Activated CD4-positive, alpha-beta memory T cell treated with anti-CD3 and anti-CD28 coated beads, Interleukin-2, amount 10 ng/mL, durations not matched to agents 7 days and 5 days (primary cell): ENCODE measurements at regions of chr19 and their contacts with region 1.

Region 1: DNA sequence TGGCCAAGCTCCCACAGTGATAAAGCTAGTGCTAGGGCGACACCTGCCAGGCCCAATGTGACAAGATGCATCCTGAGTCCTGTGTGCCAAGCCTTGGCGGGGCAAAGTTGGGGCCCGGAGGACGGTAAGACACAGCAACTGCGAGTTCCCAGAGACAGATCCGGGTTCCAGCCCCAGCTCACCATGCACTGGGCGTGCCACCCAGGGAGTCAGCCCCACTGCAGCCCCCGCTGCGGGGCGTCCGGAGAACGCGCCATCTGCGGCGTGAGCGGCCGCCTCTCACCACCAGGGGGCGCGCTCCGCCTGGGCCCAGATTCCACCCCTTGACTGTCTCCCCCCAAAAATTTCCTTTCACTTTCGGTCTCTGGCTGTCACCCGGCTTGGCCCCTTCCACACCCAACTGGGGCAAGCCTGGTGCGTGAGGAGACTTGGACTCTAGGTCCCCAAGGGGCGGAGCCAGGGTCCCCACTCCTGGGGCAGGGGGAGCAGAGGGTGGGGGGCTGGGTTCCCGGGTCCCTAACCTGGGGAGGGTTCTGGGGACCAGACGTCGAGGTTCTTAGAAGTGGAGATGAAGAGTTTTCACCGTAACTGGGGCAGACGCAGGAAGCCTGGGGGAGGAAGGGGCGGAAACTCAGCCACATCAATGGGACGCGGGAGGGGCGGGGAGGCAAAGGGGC is at the start of gene FLT3LG:
- DNase-seq: peak; percentile 94
- H3K4me3 Mint-ChIP-seq: peak within 1 kb of the TSS; percentile 97
- H3K27ac Mint-ChIP-seq: peak within 1 kb of the TSS; percentile 92
- H3K4me1 Mint-ChIP-seq: peaks cover 60% of the 10 kb centered on the region
- H3K27me3 Mint-ChIP-seq: no peaks in the 10 kb centered on the region
- total RNA-seq, gene FLT3LG: 187 to 197 TPM

Region 2: DNA sequence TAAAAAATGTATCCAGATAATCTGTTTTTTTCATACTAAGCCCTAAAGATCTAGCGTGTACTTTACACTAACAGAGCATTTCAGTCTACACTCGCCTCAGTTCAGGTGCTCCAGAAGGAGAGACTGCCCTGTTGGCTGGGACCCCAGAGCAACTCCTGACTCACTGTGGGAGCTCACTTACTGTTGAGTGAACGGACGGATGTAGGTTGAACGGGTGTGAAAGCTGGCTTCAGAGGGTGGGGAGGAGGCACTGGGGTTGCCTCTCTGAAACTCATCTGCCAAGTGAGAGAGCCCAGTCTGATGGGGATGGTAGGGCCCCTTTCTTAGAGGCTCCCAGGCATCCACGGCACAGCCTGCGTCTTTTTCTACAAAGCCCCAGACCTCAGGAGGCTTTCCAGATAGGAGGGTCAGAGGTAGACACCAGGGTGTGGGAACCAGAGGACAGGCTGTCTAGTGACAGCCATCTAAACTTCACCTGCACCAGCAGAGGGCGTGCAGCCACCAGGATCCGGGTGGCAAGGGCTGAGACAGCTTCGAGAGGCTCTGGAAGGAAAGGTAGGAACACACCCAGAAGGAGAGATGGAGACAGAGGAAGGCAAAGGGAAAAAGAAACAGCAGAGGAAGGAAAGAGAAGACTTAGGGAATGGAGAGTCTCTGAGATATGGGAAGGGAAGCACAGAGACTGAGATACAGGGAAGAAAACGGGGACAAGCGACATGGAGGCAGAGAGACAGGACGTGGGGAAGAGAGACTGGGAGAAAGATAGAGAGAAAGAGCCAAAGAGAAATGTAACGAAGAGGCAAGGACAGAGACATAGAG is 82.2 kb before region 1 on chr19:
- CTCF ChIA-PET with region 1: interaction called, 55 read pairs
- POLR2A ChIA-PET with region 1: interaction called, 14 read pairs
- DNase-seq: peak; percentile 85
- H3K4me3 Mint-ChIP-seq: no peak overlapping the region
- H3K27ac Mint-ChIP-seq: peak overlapping the region; percentile 29
- H3K4me1 Mint-ChIP-seq: peaks cover 33% of the 10 kb centered on the region
- H3K27me3 Mint-ChIP-seq: peaks cover 10% of the 10 kb centered on the region

Region 3: DNA sequence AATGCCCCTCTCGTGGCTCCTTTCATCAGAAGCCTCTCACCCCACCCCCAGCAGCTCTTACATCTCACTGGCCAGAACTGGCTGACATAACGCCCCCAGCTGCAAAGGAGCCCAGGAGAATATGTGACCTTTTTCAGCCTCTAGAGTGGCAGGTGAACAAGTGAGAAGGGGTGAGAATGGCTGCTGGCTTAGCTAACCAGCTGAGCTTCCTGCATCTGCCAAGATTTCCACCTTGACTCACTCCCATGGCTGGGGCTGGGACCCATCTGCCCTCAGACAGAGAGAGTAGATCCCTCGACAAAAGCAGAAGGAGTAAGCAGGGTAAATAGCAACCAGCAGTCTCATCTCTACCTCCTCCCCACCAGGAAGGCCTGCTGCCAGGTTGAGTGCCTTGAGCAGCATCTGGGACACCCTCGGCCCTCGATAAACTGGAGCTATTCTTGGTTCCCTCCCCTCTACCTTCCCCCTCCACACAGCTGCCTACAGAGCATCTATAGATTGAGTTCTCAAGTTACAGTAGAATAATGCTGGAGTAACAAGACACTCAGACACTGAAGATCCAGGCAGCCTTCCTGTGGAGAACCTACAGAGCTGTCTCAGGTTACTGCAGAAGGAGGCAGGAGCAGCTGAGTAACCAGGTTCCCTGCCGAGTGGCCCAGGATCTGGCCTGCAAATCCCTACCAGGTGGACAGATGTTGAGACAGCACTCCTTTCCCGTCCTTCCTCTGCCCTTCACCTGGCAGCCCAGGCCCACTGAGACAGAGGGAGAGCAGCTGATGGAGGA is 70.4 kb before region 1 on chr19:
- CTCF ChIA-PET with region 1: no interaction called
- POLR2A ChIA-PET with region 1: no interaction called
- DNase-seq: no peak
- H3K4me3 Mint-ChIP-seq: no peak overlapping the region
- H3K27ac Mint-ChIP-seq: no peak overlapping the region
- H3K4me1 Mint-ChIP-seq: peaks cover 20% of the 10 kb centered on the region
- H3K27me3 Mint-ChIP-seq: peaks cover 4% of the 10 kb centered on the region

Region 4: GRCh38 chr19:49451430-49452181 is 22.4 kb before region 1 on chr19 and contains the start of gene PIH1D1:
- CTCF ChIA-PET with region 1: interaction called, 159 read pairs
- POLR2A ChIA-PET with region 1: interaction called, 192 read pairs
- DNase-seq: peak; percentile 97
- H3K4me3 Mint-ChIP-seq: peak within 1 kb of the TSS; percentile 99
- H3K27ac Mint-ChIP-seq: peak within 1 kb of the TSS; percentile 100
- H3K4me1 Mint-ChIP-seq: peaks cover 72% of the 10 kb centered on the region
- H3K27me3 Mint-ChIP-seq: no peaks in the 10 kb centered on the region
- total RNA-seq, gene PIH1D1: 168 to 170 TPM

Region 5: DNA sequence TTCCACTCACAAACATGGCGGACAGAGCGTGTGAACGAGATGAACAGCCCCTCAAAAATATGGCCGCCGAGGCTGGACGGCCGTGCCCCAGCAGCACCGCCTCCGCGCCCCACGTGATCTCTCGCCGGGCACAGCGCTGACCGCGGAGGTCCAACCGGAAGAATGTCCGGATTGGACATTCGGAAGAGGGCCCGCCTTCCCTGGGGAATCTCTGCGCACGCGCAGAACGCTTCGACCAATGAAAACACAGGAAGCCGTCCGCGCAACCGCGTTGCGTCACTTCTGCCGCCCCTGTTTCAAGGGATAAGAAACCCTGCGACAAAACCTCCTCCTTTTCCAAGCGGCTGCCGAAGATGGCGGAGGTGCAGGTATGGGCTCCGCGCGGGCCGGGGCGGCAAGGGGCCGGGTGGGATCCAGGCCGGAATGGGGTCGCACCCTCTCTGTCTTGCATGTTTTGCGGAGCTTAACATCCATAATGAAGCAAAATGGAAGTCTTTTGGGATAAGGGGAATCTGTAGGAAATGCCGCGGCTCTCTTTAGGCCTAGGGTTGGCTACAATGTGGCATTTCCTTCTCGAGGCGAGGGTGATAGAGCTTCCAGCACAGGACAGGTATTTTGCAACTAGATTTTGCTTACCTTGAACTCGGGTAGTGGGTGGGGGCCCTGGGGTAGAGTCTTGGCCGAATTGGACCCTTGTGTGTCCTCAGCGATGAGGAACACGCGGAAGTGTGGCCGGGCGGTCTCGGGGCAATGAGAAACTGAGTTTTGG is 13.5 kb after region 1 on chr19 and contains the start of gene RPL13A:
- CTCF ChIA-PET with region 1: interaction called, 15 read pairs
- POLR2A ChIA-PET with region 1: interaction called, 68 read pairs
- DNase-seq: peak; percentile 100
- H3K4me3 Mint-ChIP-seq: peak within 1 kb of the TSS; percentile 95
- H3K27ac Mint-ChIP-seq: peak within 1 kb of the TSS; percentile 87
- H3K4me1 Mint-ChIP-seq: peaks cover 50% of the 10 kb centered on the region
- H3K27me3 Mint-ChIP-seq: no peaks in the 10 kb centered on the region
- total RNA-seq, gene RPL13A: 2,417 to 2,463 TPM

Region 6: DNA sequence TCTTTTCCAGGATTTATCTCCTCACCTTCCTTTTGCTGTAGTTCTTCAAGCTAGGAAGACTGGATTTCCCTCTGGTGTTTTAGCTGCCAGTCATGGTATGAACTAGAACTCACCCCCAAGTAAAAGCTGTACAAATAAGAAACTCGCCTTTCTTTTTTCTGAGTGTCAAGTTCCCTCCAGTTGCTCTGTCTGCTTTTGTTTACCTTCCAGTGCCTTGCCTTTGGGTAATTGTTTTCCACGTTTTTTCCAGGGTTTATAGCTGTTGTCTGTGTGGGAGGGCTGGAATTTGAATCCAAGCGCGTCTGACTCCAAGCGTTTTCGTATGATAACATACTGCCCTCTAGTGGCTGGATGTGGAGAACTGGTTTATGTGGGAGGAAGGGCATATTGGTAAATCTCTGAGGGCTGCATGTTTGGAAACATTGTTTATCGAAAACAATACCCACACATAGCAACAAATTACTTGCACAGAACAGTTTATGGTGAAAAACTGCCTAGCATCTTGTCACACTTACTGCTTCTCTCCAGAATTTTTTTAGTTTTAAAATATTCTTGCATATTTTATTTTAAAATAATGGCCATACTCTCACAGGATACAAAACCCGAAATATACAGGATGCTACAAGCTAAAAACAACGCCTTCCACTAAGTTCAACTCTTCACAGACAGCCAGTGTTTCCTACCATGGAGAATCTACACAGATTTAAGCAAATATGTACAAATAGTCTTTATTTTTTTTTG is 73.0 kb after region 1 on chr19:
- CTCF ChIA-PET with region 1: interaction called, 13 read pairs
- POLR2A ChIA-PET with region 1: interaction called, 5 read pairs
- DNase-seq: peak; percentile 69
- H3K4me3 Mint-ChIP-seq: peak overlapping the region; percentile 56
- H3K27ac Mint-ChIP-seq: peak overlapping the region; percentile 58
- H3K4me1 Mint-ChIP-seq: peaks cover 45% of the 10 kb centered on the region
- H3K27me3 Mint-ChIP-seq: peaks cover 6% of the 10 kb centered on the region